ENCODE measurements at regions of chr5 and their contacts with region 1.

Region 1: DNA sequence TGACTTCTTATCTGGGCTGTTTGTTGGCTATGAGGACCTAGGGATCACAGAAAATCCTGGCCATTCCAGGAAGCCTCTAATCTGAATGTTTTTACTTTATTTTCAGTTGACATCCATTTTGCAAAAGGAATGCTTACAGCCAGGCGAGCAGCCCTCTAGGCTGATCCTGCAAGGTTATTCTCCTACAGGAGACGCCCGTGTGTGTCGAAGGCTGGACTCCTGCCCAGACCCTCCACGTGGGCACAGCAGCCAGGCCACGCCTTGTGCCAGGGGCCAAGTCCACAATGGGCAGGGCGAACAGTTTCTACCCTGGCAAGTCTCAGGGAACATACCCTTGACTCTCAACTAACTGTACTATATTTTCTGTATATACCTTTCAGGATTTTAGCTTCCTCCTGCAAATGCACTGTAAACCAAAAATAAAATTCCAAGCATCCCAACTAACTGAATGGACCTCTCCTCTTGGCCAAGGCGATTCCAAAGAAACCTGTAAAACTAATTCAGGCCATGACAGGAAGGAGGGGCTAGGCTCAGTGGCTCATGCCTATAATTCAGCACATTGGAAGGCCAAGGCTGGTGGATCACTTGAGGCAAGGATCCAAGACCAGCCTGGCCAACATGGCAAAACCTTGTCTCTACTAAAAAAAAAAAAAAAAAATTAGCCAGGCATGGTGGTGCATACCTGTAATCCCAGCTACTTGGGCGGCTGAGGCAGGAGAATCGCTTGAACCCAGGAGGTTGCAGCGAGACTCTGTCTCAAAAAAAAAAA is 5.7 kb downstream of the CMBL start:
- DNase-seq: peak; percentile 90
- H3K4me3 Mint-ChIP-seq: peak overlapping the region; percentile 69
- H3K27ac Mint-ChIP-seq: no peak overlapping the region
- H3K4me1 Mint-ChIP-seq: peaks cover 48% of the 10 kb centered on the region
- H3K27me3 Mint-ChIP-seq: no peaks in the 10 kb centered on the region
- CTCF ChIP-seq: no peak

Region 2: DNA sequence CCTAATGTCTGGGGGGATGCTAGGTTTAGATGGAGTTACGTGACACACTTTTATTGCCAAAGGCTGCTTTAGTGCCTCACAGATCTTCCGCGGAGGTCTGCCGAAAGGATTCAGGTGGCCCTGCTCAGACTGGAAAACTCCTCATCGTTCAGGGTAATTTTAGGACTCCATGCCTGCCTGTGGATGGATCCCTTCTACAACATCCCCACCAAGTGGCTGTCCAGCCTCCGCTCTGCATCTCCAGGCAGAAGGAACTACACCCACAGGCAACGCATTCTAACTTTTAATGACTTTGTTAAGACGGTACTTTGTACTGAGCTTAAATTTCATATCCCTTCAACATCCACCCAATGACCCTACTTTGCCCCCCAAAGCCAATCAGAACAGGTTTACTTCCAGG is 81.8 kb before region 1 on chr5:
- CTCF ChIA-PET with region 1: no interaction called
- intact Hi-C with region 1: no loop called
- DNase-seq: no peak
- H3K4me3 Mint-ChIP-seq: no peak overlapping the region
- H3K27ac Mint-ChIP-seq: no peak overlapping the region
- H3K4me1 Mint-ChIP-seq: no peaks in the 10 kb centered on the region
- H3K27me3 Mint-ChIP-seq: no peaks in the 10 kb centered on the region
- CTCF ChIP-seq: no peak

Region 3: DNA sequence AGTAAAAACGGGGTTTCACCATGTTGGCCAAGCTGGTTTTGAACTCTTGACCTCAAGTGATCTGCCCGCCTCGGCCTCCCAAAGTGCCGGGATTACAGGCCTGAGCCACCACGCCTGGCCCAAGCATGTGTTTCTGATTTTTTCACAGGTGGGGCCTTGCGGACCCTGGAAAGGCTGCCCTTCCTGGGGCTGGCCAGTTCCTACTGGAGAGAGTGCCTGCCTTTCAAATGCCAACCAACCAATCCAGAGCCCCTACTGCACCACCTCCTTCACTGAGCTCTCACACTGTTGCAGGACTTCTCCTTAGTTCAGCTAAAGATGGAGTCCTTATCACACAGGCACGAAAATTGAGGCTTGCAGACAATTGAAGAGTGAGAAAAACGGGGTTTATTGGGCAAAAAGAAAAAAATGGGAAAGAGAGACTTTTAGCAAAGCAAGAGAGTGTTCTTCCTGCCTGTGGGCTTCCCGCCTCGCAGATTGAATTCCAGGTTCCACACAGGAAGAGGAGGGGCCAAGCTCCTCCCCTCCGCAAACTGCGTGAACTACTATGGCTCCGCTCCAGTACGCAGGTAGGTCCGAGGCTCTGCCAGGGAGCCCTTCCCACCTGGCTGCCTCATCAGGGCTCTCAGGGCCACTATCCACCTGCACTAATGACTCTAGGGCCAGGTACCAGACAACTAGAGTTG is 13.9 kb after region 1 on chr5:
- CTCF ChIA-PET with region 1: no interaction called
- intact Hi-C with region 1: no loop called
- DNase-seq: no peak
- H3K4me3 Mint-ChIP-seq: no peak overlapping the region
- H3K27ac Mint-ChIP-seq: no peak overlapping the region
- H3K4me1 Mint-ChIP-seq: peaks cover 2% of the 10 kb centered on the region
- H3K27me3 Mint-ChIP-seq: no peaks in the 10 kb centered on the region
- CTCF ChIP-seq: no peak

Region 4: GRCh38 chr5:10353241-10354047 is 51.4 kb after region 1 on chr5 and contains the start of gene MARCHF6:
- CTCF ChIA-PET with region 1: no interaction called
- intact Hi-C with region 1: loop called (anchors 5 kb)
- DNase-seq: peak; percentile 96
- H3K4me3 Mint-ChIP-seq: peak within 1 kb of the TSS; percentile 93
- H3K27ac Mint-ChIP-seq: peak within 1 kb of the TSS; percentile 99
- H3K4me1 Mint-ChIP-seq: peaks cover 26% of the 10 kb centered on the region
- H3K27me3 Mint-ChIP-seq: no peaks in the 10 kb centered on the region
- CTCF ChIP-seq: no peak
- total RNA-seq, gene MARCHF6: 155 and 160 TPM in 2 replicates